Transverse colon (tissue), 4 donors: ENCODE measurements at regions of chr4 and their contacts with region 1.

Region 1: DNA sequence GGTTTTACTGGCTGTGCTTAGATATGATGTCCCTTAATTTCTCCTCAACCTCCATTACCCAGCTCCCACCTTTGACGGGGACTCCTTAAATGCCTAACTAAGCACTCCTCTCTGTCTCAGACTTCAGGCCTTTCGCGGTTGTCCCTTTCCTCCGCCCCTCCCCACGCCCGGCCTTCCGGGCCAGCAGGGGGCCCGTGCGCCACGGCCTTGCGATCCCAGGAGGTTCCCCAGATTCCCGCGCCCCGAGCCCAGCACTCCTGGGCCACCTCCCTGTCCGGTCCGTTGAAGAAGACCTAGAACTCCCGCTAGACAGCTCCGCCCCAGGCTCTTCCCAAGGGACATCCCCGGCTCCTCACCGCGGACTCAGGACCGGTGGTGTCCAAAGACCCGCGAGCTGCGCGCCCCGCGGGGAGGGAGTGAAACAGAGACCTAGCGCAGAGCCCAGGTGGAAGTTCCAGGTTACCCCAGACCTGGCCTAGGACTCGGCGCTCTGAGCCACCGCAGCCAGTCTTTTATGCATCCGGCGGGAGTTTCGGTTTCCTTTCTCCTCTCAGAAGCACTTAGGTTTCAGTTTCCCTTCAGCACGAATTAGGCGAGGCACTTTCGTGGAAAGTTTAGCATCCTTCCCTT is at the start of gene DDX60:
- DNase-seq: peak; percentile 88
- H3K4me3 ChIP-seq: peak within 1 kb of the TSS; percentile 22 to 89 (median 62)
- H3K27ac ChIP-seq: peak within 1 kb of the TSS; percentile 85 to 97 (median 91)
- H3K4me1 ChIP-seq: peaks cover 0 to 45% (median 24%) of the 10 kb centered on the region in 4 donors
- H3K27me3 ChIP-seq: no peaks in the 10 kb centered on the region
- CTCF ChIP-seq: peak; percentile 39 to 72 (median 46)
- EP300 ChIP-seq: no peak
- POLR2A ChIP-seq: peak; percentile 82
- total RNA-seq, gene DDX60: 26.9 to 119 (median 52.5) TPM

Region 2: GRCh38 chr4:168421671-168422070 is 103.3 kb after region 1 on chr4:
- in situ Hi-C with region 1: no loop called
- intact Hi-C with region 1: no loop called
- DNase-seq: no peak
- H3K4me3 ChIP-seq: no peak overlapping the region
- H3K27ac ChIP-seq: no peak overlapping the region
- H3K4me1 ChIP-seq: no peaks in the 10 kb centered on the region
- H3K27me3 ChIP-seq: no peaks in the 10 kb centered on the region
- CTCF ChIP-seq: no peak
- EP300 ChIP-seq: no peak
- POLR2A ChIP-seq: no peak

Region 3: GRCh38 chr4:168480931-168481611 is 162.7 kb after region 1 on chr4:
- in situ Hi-C with region 1: loop called in 1 of 4 experiments (anchors 25 kb)
- intact Hi-C with region 1: no loop called
- DNase-seq: peak; percentile 19
- H3K4me3 ChIP-seq: peak overlapping the region; percentile 32 to 81 (median 68)
- H3K27ac ChIP-seq: peak overlapping the region; percentile 91 to 96 (median 94)
- H3K4me1 ChIP-seq: peaks cover 0 to 32% (median 1%) of the 10 kb centered on the region in 4 donors
- H3K27me3 ChIP-seq: no peaks in the 10 kb centered on the region
- CTCF ChIP-seq: no peak
- EP300 ChIP-seq: no peak
- POLR2A ChIP-seq: no peak